ENCODE measurements at regions of chr4 and their contacts with region 1.

Region 1: DNA sequence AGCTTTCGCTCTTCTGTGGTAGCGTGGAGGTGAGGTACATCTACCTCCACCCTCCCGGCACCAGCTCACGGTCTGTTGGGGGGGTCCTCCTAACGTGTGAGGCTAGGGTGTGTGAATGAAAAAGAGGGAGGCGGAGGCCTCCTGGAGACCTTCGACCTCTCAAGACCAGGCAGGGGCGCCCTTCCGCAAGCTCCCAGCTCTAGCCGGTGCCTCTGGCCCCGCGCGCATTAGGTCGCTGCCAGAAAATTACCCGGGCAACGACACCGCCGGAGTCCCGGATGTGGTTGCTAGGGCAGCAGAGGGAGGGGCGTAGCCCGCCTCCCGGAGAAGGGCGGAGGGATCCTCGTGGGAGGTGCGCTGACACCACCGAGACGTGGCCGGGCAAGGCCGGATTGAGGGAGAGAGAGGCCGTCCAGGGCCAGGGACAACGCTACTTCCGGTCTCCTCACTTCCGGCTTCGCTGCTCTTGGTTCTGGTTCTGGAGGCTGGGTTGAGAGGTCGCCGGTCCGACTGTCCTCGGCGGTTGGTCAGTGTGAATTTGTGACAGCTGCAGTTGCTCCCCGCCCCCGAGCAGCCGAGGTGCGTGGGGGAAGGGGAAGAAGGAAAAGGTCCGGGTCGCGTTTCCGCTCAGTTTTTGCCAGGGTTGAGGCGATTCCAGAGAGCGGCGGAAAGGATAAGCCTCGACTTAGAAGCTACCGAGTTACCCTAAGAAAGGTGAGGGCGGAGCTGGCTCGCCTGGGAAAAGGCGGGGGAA is at the starts of genes ARFIP1 and TIGD4:
- DNase-seq: peak; percentile 93
- ATAC-seq: peak; percentile 88
- H3K4me3 Mint-ChIP-seq: peak within 1 kb of the TSS; percentile 97
- H3K27ac Mint-ChIP-seq: peak within 1 kb of the TSS; percentile 92
- H3K4me1 Mint-ChIP-seq: peaks cover 41% of the 10 kb centered on the region
- H3K27me3 Mint-ChIP-seq: no peaks in the 10 kb centered on the region
- CTCF ChIP-seq: no peak
- total RNA-seq, gene ARFIP1: 16.8 and 19.5 TPM in 2 replicates
- total RNA-seq, gene TIGD4: 0.24 and 0.44 TPM in 2 replicates

Region 2: GRCh38 chr4:151760712-151761527 is 1018.8 kb before region 1 on chr4 and contains the start of gene GATB:
- CTCF ChIA-PET with region 1: no interaction called
- POLR2A ChIA-PET with region 1: no interaction called
- intact Hi-C with region 1: loop called (anchors 1 kb)
- DNase-seq: peak; percentile 76
- ATAC-seq: peak; percentile 98
- H3K4me3 Mint-ChIP-seq: peak within 1 kb of the TSS; percentile 100
- H3K27ac Mint-ChIP-seq: peak within 1 kb of the TSS; percentile 98
- H3K4me1 Mint-ChIP-seq: peaks cover 13% of the 10 kb centered on the region
- H3K27me3 Mint-ChIP-seq: peaks cover 6% of the 10 kb centered on the region
- CTCF ChIP-seq: no peak
- total RNA-seq, gene GATB: 22.1 and 22.9 TPM in 2 replicates

Region 3: GRCh38 chr4:152663203-152664066 is 116.3 kb before region 1 on chr4:
- CTCF ChIA-PET with region 1: no interaction called
- POLR2A ChIA-PET with region 1: no interaction called
- intact Hi-C with region 1: loop called (anchors 1 kb)
- DNase-seq: no peak
- ATAC-seq: peak; percentile 73
- H3K4me3 Mint-ChIP-seq: peak overlapping the region; percentile 77
- H3K27ac Mint-ChIP-seq: peak overlapping the region; percentile 93
- H3K4me1 Mint-ChIP-seq: peaks cover 94% of the 10 kb centered on the region
- H3K27me3 Mint-ChIP-seq: no peaks in the 10 kb centered on the region
- CTCF ChIP-seq: no peak

Region 4: GRCh38 chr4:152831416-152831815 is 51.7 kb after region 1 on chr4:
- CTCF ChIA-PET with region 1: no interaction called
- POLR2A ChIA-PET with region 1: no interaction called
- intact Hi-C with region 1: no loop called
- DNase-seq: no peak
- ATAC-seq: no peak
- H3K4me3 Mint-ChIP-seq: no peak overlapping the region
- H3K27ac Mint-ChIP-seq: no peak overlapping the region
- H3K4me1 Mint-ChIP-seq: no peaks in the 10 kb centered on the region
- H3K27me3 Mint-ChIP-seq: no peaks in the 10 kb centered on the region
- CTCF ChIP-seq: no peak

Region 5: GRCh38 chr4:152850377-152850776 is 70.7 kb after region 1 on chr4:
- CTCF ChIA-PET with region 1: interaction called, 3 read pairs
- POLR2A ChIA-PET with region 1: no interaction called
- intact Hi-C with region 1: loop called (anchors 2 kb)
- DNase-seq: no peak
- ATAC-seq: peak; percentile 75
- H3K4me3 Mint-ChIP-seq: peak overlapping the region; percentile 52
- H3K27ac Mint-ChIP-seq: peak overlapping the region; percentile 78
- H3K4me1 Mint-ChIP-seq: peaks cover 25% of the 10 kb centered on the region
- H3K27me3 Mint-ChIP-seq: no peaks in the 10 kb centered on the region
- CTCF ChIP-seq: no peak